GM12878 (cell line): ENCODE measurements at regions of chr12 and their contacts with region 1.

Region 1: DNA sequence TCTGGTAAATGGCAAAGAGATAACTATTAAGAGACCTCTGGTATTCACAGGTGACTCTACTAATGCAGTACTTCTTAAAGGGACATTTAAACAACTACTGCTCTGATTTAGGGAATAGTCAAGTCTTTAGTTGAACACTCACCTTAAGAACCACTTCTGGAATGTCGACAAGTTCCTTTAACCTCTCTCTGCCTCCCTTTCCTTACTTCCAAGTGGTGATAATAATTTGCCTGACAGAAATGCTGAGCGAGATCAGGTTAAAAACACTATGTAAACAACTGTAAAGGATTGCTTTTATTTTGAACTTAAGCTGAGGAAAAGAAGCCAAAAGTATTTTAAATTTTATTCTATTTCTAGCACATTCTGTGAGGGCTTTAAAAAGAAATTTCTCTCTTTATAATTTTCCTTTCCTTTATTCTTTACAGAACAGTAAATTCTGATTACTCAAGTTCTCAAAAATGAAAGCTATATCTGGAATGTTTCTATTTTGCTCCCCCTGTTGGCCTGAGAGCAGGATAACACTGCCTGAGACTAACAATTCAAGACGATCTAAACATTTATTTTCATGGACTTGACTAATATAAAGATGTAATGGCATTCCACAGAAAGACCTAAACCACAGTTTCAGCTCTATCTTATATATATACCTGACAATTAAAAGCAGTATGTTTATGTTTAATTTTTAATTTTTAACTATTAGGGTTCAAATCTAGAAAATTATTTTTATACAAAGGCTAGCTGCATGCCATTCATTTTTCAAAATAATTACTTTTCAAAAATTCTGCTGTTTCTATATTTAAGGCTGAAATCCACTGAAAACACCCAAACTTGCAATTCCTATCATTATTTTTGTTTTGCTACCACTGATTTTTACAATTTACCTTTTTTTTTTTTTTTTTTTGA is 29.2 kb downstream of the ZCCHC8 start:
- DNase-seq: no peak
- ATAC-seq: peak; percentile 69
- H3K4me3 ChIP-seq: no peak overlapping the region
- H3K27ac ChIP-seq: no peak overlapping the region
- H3K4me1 ChIP-seq: peaks cover 24% of the 10 kb centered on the region
- H3K27me3 ChIP-seq: no peaks in the 10 kb centered on the region
- CTCF ChIP-seq: peak; percentile 63 to 71 (median 70); a peak in 5 of 6 replicates
- EP300 ChIP-seq: no peak
- POLR2A ChIP-seq: no peak
- RAD21 ChIP-seq: peak; percentile 83

Region 2: GRCh38 chr12:122021822-122022526 is 449.6 kb before region 1 on chr12 and contains the start of gene BCL7A:
- CTCF ChIA-PET with region 1: no interaction called
- POLR2A ChIA-PET with region 1: no interaction called
- RAD21 ChIA-PET with region 1: no interaction called
- SMC1A ChIA-PET with region 1: no interaction called
- in situ Hi-C with region 1: no loop called
- intact Hi-C with region 1: no loop called
- DNase-seq: no peak
- ATAC-seq: peak; percentile 67
- H3K4me3 ChIP-seq: peak within 1 kb of the TSS; percentile 67; the same call in 1 of the 2 replicates
- H3K27ac ChIP-seq: no peak within 1 kb of the TSS
- H3K4me1 ChIP-seq: peaks cover 19% of the 10 kb centered on the region
- H3K27me3 ChIP-seq: peaks cover 3 to 17% of the 10 kb centered on the region in 2 experiments
- CTCF ChIP-seq: no peak
- EP300 ChIP-seq: no peak
- POLR2A ChIP-seq: peak; percentile 32
- RAD21 ChIP-seq: no peak
- polyA plus RNA-seq, gene BCL7A: 0.37 to 0.69 TPM

Region 3: DNA sequence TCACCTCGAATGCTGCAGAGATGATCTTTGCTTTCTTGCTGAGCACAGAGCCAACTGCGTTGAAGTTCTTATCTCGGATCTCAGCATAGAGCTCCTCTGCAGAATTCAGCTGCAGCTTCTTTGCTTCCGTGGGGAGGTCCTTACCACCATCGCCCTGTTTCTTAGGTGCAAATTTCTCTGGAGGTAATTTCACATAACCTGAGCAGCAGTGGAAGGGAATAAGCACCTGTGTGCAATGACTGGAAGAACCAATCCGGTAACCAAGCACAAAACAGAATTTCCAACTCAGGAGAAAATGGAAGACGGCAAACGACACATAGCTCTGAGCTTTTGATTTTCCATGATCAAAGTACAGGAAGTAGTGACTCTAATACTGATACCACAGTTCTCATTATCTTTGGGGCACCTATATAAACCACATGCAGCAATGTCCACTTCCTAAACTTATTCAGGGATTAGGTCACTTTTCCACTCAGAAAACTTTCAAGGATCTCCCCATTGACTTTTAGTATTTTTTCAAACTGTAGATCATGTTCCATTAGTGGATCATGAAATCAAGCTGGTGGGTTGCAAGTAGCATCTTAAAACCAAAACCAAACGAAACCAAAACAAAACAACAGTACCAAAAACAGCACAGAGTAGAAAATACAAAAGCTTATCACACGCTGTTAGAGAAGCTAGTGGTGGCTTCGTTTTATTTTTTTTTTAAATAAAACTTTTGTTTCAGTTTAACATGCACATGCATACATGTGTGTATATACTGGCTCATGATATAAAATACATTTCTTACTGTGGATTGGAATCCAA is 226.8 kb before region 1 on chr12:
- CTCF ChIA-PET with region 1: no interaction called
- POLR2A ChIA-PET with region 1: no interaction called
- RAD21 ChIA-PET with region 1: no interaction called
- SMC1A ChIA-PET with region 1: no interaction called
- in situ Hi-C with region 1: no loop called
- intact Hi-C with region 1: no loop called
- DNase-seq: no peak
- ATAC-seq: no peak
- H3K4me3 ChIP-seq: no peak overlapping the region
- H3K27ac ChIP-seq: no peak overlapping the region; the same call in 1 of the 2 replicates
- H3K4me1 ChIP-seq: peaks cover 15% of the 10 kb centered on the region
- H3K27me3 ChIP-seq: no peaks in the 10 kb centered on the region
- CTCF ChIP-seq: no peak
- EP300 ChIP-seq: no peak
- POLR2A ChIP-seq: no peak
- RAD21 ChIP-seq: no peak

Region 4: GRCh38 chr12:122336015-122336946 is 135.3 kb before region 1 on chr12:
- CTCF ChIA-PET with region 1: interaction called, 27 read pairs
- POLR2A ChIA-PET with region 1: no interaction called
- RAD21 ChIA-PET with region 1: interaction called, 10 read pairs
- SMC1A ChIA-PET with region 1: interaction called, 8 read pairs
- in situ Hi-C with region 1: no loop called
- intact Hi-C with region 1: no loop called
- DNase-seq: no peak
- ATAC-seq: peak; percentile 79
- H3K4me3 ChIP-seq: peak overlapping the region; percentile 62; the same call in 1 of the 2 replicates
- H3K27ac ChIP-seq: peak overlapping the region; percentile 34; the same call in 1 of the 2 replicates
- H3K4me1 ChIP-seq: no peaks in the 10 kb centered on the region
- H3K27me3 ChIP-seq: no peaks in the 10 kb centered on the region
- CTCF ChIP-seq: peak; percentile 68 to 74 (median 73)
- EP300 ChIP-seq: no peak
- POLR2A ChIP-seq: no peak
- RAD21 ChIP-seq: peak; percentile 68

Region 5: GRCh38 chr12:122421821-122422729 is 49.5 kb before region 1 on chr12 and contains the start of gene CLIP1:
- CTCF ChIA-PET with region 1: interaction called, 21 read pairs
- POLR2A ChIA-PET with region 1: no interaction called
- RAD21 ChIA-PET with region 1: interaction called, 11 read pairs
- SMC1A ChIA-PET with region 1: interaction called, 48 read pairs
- in situ Hi-C with region 1: no loop called
- intact Hi-C with region 1: no loop called
- DNase-seq: no peak
- ATAC-seq: peak; percentile 84
- H3K4me3 ChIP-seq: peak within 1 kb of the TSS; percentile 87
- H3K27ac ChIP-seq: peak within 1 kb of the TSS; percentile 88
- H3K4me1 ChIP-seq: peaks cover 25% of the 10 kb centered on the region
- H3K27me3 ChIP-seq: no peaks in the 10 kb centered on the region
- CTCF ChIP-seq: peak; percentile 30 to 57 (median 54); a peak in 4 of 6 replicates
- EP300 ChIP-seq: no peak
- POLR2A ChIP-seq: peak; percentile 72
- RAD21 ChIP-seq: peak; percentile 50
- polyA plus RNA-seq, gene CLIP1: 6.0 to 6.3 TPM

Region 6: DNA sequence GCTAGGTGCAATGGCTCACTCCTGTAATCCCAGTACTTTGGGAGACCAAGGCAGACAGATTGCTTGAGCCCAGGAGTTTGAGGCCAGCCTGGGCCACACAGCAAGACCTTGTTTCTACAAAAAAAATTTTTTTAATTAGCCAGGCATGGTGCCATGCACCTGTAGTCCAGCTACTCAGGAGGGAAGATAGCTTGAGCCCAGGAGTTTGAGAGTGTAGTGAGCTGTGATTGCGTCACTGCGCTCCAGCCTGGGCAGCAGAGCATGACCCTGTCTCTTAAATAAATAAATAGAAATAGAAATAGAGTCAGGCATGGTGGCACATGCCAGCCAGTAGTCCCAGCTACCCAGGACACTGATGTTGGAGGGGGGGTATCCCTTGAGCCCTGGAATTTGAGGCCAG is 12.4 kb before region 1 on chr12:
- CTCF ChIA-PET with region 1: interaction called, 25 read pairs
- POLR2A ChIA-PET with region 1: no interaction called
- RAD21 ChIA-PET with region 1: no interaction called
- SMC1A ChIA-PET with region 1: interaction called, 12 read pairs
- in situ Hi-C with region 1: no loop called
- intact Hi-C with region 1: no loop called
- DNase-seq: no peak
- ATAC-seq: no peak
- H3K4me3 ChIP-seq: no peak overlapping the region
- H3K27ac ChIP-seq: no peak overlapping the region
- H3K4me1 ChIP-seq: peaks cover 8% of the 10 kb centered on the region
- H3K27me3 ChIP-seq: no peaks in the 10 kb centered on the region
- CTCF ChIP-seq: no peak
- EP300 ChIP-seq: no peak
- POLR2A ChIP-seq: no peak
- RAD21 ChIP-seq: no peak

Region 7: GRCh38 chr12:122500685-122501488 is 29.3 kb after region 1 on chr12 and contains the start of gene ZCCHC8:
- CTCF ChIA-PET with region 1: interaction called, 6 read pairs
- POLR2A ChIA-PET with region 1: no interaction called
- RAD21 ChIA-PET with region 1: interaction called, 4 read pairs
- SMC1A ChIA-PET with region 1: interaction called, 13 read pairs
- in situ Hi-C with region 1: no loop called
- intact Hi-C with region 1: no loop called
- DNase-seq: peak; percentile 95
- ATAC-seq: peak; percentile 95
- H3K4me3 ChIP-seq: peak within 1 kb of the TSS; percentile 96
- H3K27ac ChIP-seq: peak within 1 kb of the TSS; percentile 98
- H3K4me1 ChIP-seq: peaks cover 10% of the 10 kb centered on the region
- H3K27me3 ChIP-seq: no peaks in the 10 kb centered on the region
- CTCF ChIP-seq: peak in 2 of 3 experiments; percentile 12 to 15; a peak in 1 of 6 replicates
- EP300 ChIP-seq: 0 out of 4 replicates have a peak, but pooled peaks of 1 of the 2 experiments have one; percentile 23
- POLR2A ChIP-seq: peak; percentile 94
- RAD21 ChIP-seq: no peak
- polyA plus RNA-seq, gene ZCCHC8: 8.8 to 9.4 TPM